CD8-positive, alpha-beta T cell (primary cell): ENCODE measurements at regions of chr4 and their contacts with region 1.

Region 1: DNA sequence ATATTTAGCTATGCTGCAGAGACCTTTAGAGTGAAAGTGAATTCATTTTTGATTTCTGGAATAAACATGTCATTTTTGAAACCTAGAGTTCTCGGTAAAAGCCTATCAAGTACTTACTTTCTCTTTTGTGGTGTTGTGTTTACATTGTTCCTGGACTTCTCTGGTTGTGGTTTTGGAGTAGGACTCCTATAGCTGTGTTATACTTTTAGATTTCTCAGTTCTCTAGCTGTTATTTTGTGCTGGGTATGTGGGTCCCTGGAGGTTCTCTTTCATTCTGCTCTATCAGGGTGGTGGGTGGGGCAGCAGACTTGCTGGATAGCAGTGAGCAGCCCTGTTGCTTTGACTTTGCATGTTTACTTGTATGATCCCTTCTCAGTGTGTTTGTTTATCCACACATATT is 25.6 kb upstream of the MSMO1 start:
- DNase-seq: peak in 1 of 9 experiments; percentile 27
- ATAC-seq: peak; percentile 51
- H3K4me3 ChIP-seq: peak overlapping the region; percentile 5 to 9
- H3K4me3 Mint-ChIP-seq: peak overlapping the region; percentile 83
- H3K27ac ChIP-seq: peak overlapping the region in 1 of 2 experiments; percentile 34
- H3K27ac Mint-ChIP-seq: peak overlapping the region; percentile 90
- H3K4me1 ChIP-seq: peaks cover 11% of the 10 kb centered on the region
- H3K4me1 Mint-ChIP-seq: peaks cover 18% of the 10 kb centered on the region
- H3K27me3 ChIP-seq: no peaks in the 10 kb centered on the region
- H3K27me3 Mint-ChIP-seq: no peaks in the 10 kb centered on the region
- CTCF ChIP-seq: no peak

Region 2: GRCh38 chr4:164396439-164396838 is 905.4 kb before region 1 on chr4:
- CTCF ChIA-PET with region 1: no interaction called
- POLR2A ChIA-PET with region 1: no interaction called
- intact Hi-C with region 1: no loop called
- DNase-seq: no peak
- ATAC-seq: no peak
- H3K4me3 ChIP-seq: no peak overlapping the region
- H3K4me3 Mint-ChIP-seq: no peak overlapping the region
- H3K27ac ChIP-seq: no peak overlapping the region
- H3K27ac Mint-ChIP-seq: no peak overlapping the region
- H3K4me1 ChIP-seq: no peaks in the 10 kb centered on the region
- H3K4me1 Mint-ChIP-seq: no peaks in the 10 kb centered on the region
- H3K27me3 ChIP-seq: no peaks in the 10 kb centered on the region
- H3K27me3 Mint-ChIP-seq: no peaks in the 10 kb centered on the region
- CTCF ChIP-seq: no peak

Region 3: DNA sequence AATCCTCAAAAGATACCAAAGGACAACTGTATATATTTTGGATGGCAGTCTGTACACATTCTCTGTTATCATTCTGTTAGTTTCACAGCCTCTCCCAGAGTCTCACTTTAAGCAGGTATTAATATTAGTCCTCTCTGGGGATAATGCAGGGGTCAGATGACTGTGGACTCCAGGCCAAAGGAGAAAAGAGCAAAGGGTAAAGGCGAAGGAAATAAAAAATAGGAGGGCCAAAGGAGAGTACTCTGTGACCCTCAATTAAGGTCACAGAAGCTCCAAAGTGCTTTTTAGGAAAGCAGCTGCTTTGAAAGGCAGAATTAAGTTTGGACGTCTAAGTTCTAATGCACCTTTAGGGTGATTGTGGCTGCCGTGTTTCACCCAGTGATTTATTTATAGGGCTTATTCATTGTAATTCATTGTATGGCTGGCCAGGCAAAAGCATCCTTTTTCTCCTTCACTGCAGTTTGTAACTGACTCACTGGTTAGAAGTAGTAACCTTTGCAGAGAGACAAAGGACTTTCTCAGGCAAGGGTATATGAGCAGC is 33.4 kb after region 1 on chr4:
- CTCF ChIA-PET with region 1: no interaction called
- POLR2A ChIA-PET with region 1: no interaction called
- intact Hi-C with region 1: loop called in 1 of 2 experiments (anchors 5 kb)
- DNase-seq: no peak
- ATAC-seq: no peak
- H3K4me3 ChIP-seq: no peak overlapping the region
- H3K4me3 Mint-ChIP-seq: no peak overlapping the region
- H3K27ac ChIP-seq: no peak overlapping the region
- H3K27ac Mint-ChIP-seq: no peak overlapping the region
- H3K4me1 ChIP-seq: no peaks in the 10 kb centered on the region
- H3K4me1 Mint-ChIP-seq: peaks cover 32% of the 10 kb centered on the region
- H3K27me3 ChIP-seq: no peaks in the 10 kb centered on the region
- H3K27me3 Mint-ChIP-seq: no peaks in the 10 kb centered on the region
- CTCF ChIP-seq: no peak

Region 4: DNA sequence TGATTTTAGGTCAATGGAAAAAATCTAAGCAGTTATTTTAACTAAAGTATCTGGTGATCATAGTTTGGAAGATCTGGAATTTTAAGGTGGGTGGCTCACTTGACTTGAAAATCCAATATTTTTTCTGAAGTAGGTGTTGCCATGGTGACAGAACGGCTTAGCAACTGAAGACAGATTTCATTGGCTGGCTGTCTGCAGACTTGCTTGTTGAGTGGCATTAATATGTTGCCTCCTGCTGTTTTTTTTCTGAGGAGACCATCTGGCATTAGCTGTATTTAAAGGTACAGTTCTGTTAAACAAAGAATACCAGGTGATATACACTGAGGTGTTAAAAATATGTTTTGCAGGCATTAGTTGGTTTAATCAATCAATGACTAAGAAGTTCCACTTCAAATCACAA is 96.7 kb after region 1 on chr4:
- CTCF ChIA-PET with region 1: no interaction called
- POLR2A ChIA-PET with region 1: no interaction called
- intact Hi-C with region 1: no loop called
- DNase-seq: peak in 1 of 9 experiments; percentile 12
- ATAC-seq: no peak
- H3K4me3 ChIP-seq: no peak overlapping the region
- H3K4me3 Mint-ChIP-seq: no peak overlapping the region
- H3K27ac ChIP-seq: no peak overlapping the region
- H3K27ac Mint-ChIP-seq: no peak overlapping the region
- H3K4me1 ChIP-seq: no peaks in the 10 kb centered on the region
- H3K4me1 Mint-ChIP-seq: no peaks in the 10 kb centered on the region
- H3K27me3 ChIP-seq: peaks cover 0 to 2% of the 10 kb centered on the region in 2 experiments
- H3K27me3 Mint-ChIP-seq: peaks cover 6% of the 10 kb centered on the region
- CTCF ChIP-seq: no peak